ENCODE measurements at regions of chr2 and their contacts with region 1.

Region 1: DNA sequence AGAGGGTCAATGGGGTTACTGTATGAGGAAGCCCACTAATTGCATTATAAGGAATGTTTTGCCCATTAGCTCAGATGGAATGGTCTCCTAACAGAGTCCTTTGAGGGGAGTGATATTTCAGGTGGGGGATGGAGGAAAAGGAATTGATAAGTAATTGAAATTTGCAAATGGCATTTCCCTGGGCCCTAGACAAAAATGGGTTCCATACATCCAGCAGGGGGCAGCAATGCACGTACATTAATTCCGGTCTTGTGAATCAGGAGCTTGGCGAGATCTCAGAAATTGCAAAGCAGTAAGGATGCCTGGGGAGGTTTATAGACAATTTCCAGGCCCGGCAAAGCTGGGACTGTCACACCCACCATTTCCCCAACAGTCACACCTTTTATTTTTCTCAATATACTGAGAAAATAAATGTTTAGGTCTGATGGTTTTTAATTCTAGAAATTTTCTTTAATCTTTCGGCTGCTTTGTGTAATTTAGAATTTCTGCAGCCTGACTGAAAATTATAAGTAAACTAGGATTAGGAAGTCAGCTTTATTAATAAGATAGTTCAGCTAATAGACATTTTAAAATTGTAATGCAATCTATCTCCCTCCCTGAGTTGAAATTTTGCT is 122.8 kb downstream of the LYPD1 start:
- DNase-seq: peak; percentile 78
- ATAC-seq: no peak
- H3K4me3 Mint-ChIP-seq: no peak overlapping the region
- H3K27ac Mint-ChIP-seq: no peak overlapping the region
- H3K4me1 Mint-ChIP-seq: no peaks in the 10 kb centered on the region
- H3K27me3 Mint-ChIP-seq: peaks cover 2% of the 10 kb centered on the region
- CTCF ChIP-seq: peak; percentile 63

Region 2: GRCh38 chr2:132582353-132582739 is 35.2 kb after region 1 on chr2:
- CTCF ChIA-PET with region 1: no interaction called
- POLR2A ChIA-PET with region 1: no interaction called
- intact Hi-C with region 1: no loop called
- DNase-seq: no peak
- ATAC-seq: no peak
- H3K4me3 Mint-ChIP-seq: no peak overlapping the region
- H3K27ac Mint-ChIP-seq: no peak overlapping the region
- H3K4me1 Mint-ChIP-seq: no peaks in the 10 kb centered on the region
- H3K27me3 Mint-ChIP-seq: no peaks in the 10 kb centered on the region
- CTCF ChIP-seq: no peak

Region 3: GRCh38 chr2:133171393-133172004 is 624.3 kb after region 1 on chr2:
- CTCF ChIA-PET with region 1: interaction called, 15 read pairs
- POLR2A ChIA-PET with region 1: no interaction called
- intact Hi-C with region 1: loop called (anchors 10 kb)
- DNase-seq: no peak
- ATAC-seq: no peak
- H3K4me3 Mint-ChIP-seq: no peak overlapping the region
- H3K27ac Mint-ChIP-seq: no peak overlapping the region
- H3K4me1 Mint-ChIP-seq: no peaks in the 10 kb centered on the region
- H3K27me3 Mint-ChIP-seq: no peaks in the 10 kb centered on the region
- CTCF ChIP-seq: peak; percentile 40